ENCODE measurements at regions of chr1 and their contacts with region 1.

Region 1: DNA sequence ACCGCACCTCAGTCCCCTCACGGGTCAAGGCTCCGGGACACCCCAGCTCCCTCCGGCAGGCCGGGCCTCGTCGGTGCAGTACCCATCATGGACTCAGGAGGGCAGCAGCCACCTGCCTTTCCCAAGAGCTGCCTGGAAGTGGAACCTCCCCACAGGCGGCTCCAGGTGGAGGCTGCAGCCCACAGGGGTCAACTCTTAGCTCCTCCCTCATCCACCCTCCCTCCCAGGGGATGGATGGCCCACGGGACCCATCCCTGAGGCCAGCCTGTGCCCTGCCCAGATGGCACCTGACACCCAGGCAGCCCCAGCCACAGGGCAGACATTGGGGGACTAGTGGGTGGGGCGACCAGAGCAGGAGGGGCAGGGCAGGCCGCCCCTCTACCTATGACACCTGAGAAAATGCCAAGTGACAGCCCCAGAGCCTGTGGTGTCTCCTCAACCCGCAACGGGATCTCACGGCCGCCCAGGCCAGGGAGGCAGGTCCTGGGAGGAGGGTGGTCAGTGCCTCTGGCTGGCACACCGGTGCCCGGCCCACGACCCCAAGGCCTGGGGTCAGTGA is 1.2 kb upstream of the ARHGEF16 start:
- DNase-seq: peak; percentile 58 to 82 (median 72)
- H3K4me3 ChIP-seq: no peak overlapping the region
- H3K27ac ChIP-seq: no peak overlapping the region
- H3K4me1 ChIP-seq: peaks cover 3% of the 10 kb centered on the region
- H3K27me3 ChIP-seq: no peaks in the 10 kb centered on the region
- CTCF ChIP-seq: peak; percentile 78 to 81 (median 80)
- EP300 ChIP-seq: no peak
- POLR2A ChIP-seq: no peak

Region 2: DNA sequence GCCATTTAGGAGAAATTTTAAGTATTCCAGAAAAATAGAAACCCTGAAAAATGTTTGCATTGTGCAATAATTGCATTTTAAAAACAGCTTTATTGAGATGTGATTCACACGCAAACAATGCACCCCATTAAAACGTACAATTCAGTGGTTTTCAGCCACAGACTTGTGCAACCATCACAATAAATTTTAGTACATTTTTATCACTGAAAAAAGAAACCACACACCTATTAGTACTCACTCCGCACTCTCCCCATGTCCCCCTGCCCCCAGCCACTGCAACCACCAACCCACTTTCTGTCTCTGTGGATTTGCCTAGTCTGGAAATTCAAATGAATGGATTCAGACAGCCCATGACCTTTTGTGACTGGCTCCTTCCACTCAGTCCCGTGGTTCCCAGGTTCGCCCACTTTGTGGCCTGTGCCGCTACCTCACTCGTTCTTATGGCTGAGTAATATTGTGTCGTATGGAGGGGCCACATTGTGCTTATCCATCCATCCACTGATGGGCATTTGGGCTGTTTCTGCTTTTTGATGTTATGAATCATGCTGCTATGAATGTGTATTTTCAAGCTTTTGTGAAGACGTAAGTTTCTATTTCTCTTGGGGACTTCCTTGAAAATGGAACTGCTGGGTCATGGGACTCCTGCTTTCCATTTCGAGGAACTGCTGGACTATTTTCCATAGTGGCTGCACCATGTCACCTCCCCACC is 146.5 kb before region 1 on chr1:
- intact Hi-C with region 1: no loop called
- DNase-seq: no peak
- H3K4me3 ChIP-seq: no peak overlapping the region
- H3K27ac ChIP-seq: no peak overlapping the region
- H3K4me1 ChIP-seq: no peaks in the 10 kb centered on the region
- H3K27me3 ChIP-seq: no peaks in the 10 kb centered on the region
- CTCF ChIP-seq: no peak
- EP300 ChIP-seq: no peak
- POLR2A ChIP-seq: no peak

Region 3: DNA sequence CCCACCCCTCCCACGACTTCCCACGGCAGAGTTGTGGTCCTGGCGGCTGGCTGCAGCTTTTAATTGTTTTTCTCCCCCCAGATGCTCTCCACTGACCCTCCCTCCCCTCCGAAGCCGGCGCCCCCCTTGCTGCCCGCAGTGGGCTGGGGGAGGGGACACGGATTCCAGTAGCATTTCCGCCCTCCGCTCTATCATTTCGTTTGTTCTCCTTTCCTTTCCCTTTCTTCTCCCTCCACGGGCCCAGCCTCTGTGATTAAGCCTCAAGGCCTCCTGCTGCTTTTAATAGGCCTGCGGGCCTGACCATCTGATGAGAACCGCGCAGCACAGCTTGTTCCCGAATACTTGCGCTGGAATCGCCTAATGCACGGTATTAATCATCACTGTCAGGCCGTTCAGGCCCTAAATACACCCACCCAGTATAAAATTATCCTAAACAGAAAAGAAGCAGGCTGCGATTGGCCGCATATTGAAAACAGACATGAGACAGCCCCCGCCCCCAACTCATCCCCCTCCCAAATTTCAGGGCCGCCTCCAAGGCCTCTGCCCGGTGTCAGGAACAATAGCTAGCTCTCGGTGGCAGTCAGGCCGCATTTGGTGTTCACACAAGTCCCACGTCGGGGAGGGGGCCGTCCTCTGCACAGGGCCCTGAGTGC is 100.9 kb before region 1 on chr1:
- intact Hi-C with region 1: no loop called
- DNase-seq: peak; percentile 66 to 84 (median 80)
- H3K4me3 ChIP-seq: peak overlapping the region; percentile 4
- H3K27ac ChIP-seq: peak overlapping the region; percentile 80 to 84
- H3K4me1 ChIP-seq: peaks cover 27% of the 10 kb centered on the region
- H3K27me3 ChIP-seq: no peaks in the 10 kb centered on the region
- CTCF ChIP-seq: no peak
- EP300 ChIP-seq: peak; percentile 68
- POLR2A ChIP-seq: peak; percentile 49

Region 4: GRCh38 chr1:3618881-3619671 is 165.8 kb after region 1 on chr1:
- intact Hi-C with region 1: loop called in 1 of 4 experiments (anchors 2 kb)
- DNase-seq: peak; percentile 61 to 80 (median 75)
- H3K4me3 ChIP-seq: no peak overlapping the region
- H3K27ac ChIP-seq: no peak overlapping the region
- H3K4me1 ChIP-seq: peaks cover 8% of the 10 kb centered on the region
- H3K27me3 ChIP-seq: no peaks in the 10 kb centered on the region
- CTCF ChIP-seq: peak; percentile 72 to 85 (median 77)
- EP300 ChIP-seq: no peak
- POLR2A ChIP-seq: no peak

Region 5: GRCh38 chr1:3727042-3727824 is 274.0 kb after region 1 on chr1:
- intact Hi-C with region 1: loop called in 1 of 4 experiments (anchors 10 kb)
- DNase-seq: no peak
- H3K4me3 ChIP-seq: no peak overlapping the region
- H3K27ac ChIP-seq: no peak overlapping the region
- H3K4me1 ChIP-seq: peaks cover 2% of the 10 kb centered on the region
- H3K27me3 ChIP-seq: no peaks in the 10 kb centered on the region
- CTCF ChIP-seq: no peak
- EP300 ChIP-seq: no peak
- POLR2A ChIP-seq: no peak